Dorsolateral prefrontal cortex (tissue), 120 donors: ENCODE measurements at regions of chrX and their contacts with region 1.

Region 1: DNA sequence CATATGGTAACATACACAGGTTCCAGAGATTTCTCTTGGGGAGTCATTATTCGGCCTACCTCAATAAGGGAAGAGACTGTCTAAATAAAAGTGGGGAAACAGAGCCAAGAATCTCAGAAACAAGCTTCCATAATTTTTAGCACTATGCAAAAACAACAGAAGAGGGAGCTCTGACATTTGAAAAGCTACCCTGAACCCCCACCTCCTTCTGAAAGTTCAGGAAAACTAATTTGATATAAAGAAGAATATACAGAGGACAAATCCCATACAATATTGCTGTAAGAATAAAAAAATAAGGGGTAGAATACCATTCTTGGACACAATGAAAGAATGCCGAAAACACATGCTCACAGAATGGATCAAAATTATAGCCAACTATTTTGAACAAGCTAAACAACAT is 14.3 kb upstream of the ZNF41 start:
- DNase-seq: no peak
- H3K4me3 ChIP-seq: no peak overlapping the region
- H3K27ac ChIP-seq: no peak overlapping the region
- H3K27me3 ChIP-seq: peaks cover 0 to 76% (median 20%) of the 10 kb centered on the region in 45 donors
- CTCF ChIP-seq: peak in 51 of 56 donors; percentile 11 to 61 (median 34)

Region 2: GRCh38 chrX:47644557-47645091 is 147.4 kb after region 1 on chrX:
- intact Hi-C with region 1: loop called in 1 of 2 experiments (anchors 10 kb)
- DNase-seq: peak in 2 of 10 donors; percentile 30 to 51
- H3K4me3 ChIP-seq: no peak overlapping the region
- H3K27ac ChIP-seq: peak overlapping the region in 13 of 59 donors; percentile 4 to 66 (median 39)
- H3K27me3 ChIP-seq: peaks cover 0 to 57% (median 8%) of the 10 kb centered on the region in 45 donors
- CTCF ChIP-seq: peak in 52 of 56 donors; percentile 17 to 58 (median 39)